CD4-positive, alpha-beta memory T cell (primary cell): ENCODE measurements at regions of chr10 and their contacts with region 1.

Region 1: GRCh38 chr10:26334932-26335573 is 103.1 kb upstream of the APBB1IP start:
- DNase-seq: peak; percentile 66 to 74 (median 72)
- H3K4me3 ChIP-seq: peak overlapping the region; percentile 38 to 53
- H3K4me3 Mint-ChIP-seq: peak overlapping the region; percentile 76 to 93 (median 84)
- H3K27ac ChIP-seq: peak overlapping the region; percentile 5
- H3K27ac Mint-ChIP-seq: peak overlapping the region in 2 of 7 donors; percentile 61 to 79
- H3K4me1 ChIP-seq: peaks cover 4% of the 10 kb centered on the region
- H3K4me1 Mint-ChIP-seq: peaks cover 4 to 8% (median 6%) of the 10 kb centered on the region in 4 donors
- H3K27me3 ChIP-seq: no peaks in the 10 kb centered on the region
- H3K27me3 Mint-ChIP-seq: peaks cover 0 to 2% of the 10 kb centered on the region in 2 donors

Region 2: DNA sequence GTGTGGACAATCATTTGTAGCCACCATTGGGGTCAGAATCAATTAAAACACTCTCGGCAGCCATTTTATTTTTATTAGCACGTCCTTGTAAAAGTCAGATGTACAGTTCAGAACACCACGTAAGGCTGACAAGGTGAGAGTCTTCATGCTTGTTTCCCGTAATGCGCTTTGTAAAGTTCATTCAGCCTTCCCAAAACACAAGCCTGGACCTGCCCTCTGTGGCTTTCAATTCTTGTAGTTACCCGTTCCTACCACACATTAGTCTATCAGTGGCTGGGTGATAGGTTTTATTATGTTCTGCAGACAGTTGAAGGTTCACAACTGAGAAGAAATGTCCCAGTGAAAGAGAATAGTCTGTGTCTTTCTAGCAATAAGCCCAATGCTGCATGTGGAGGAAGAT is 83.1 kb before region 1 on chr10:
- CTCF ChIA-PET with region 1: no interaction called
- POLR2A ChIA-PET with region 1: no interaction called
- intact Hi-C with region 1: no loop called
- DNase-seq: no peak
- H3K4me3 ChIP-seq: no peak overlapping the region
- H3K4me3 Mint-ChIP-seq: no peak overlapping the region
- H3K27ac ChIP-seq: no peak overlapping the region
- H3K27ac Mint-ChIP-seq: no peak overlapping the region
- H3K4me1 ChIP-seq: no peaks in the 10 kb centered on the region
- H3K4me1 Mint-ChIP-seq: no peaks in the 10 kb centered on the region
- H3K27me3 ChIP-seq: no peaks in the 10 kb centered on the region
- H3K27me3 Mint-ChIP-seq: peaks cover 9 to 11% of the 10 kb centered on the region in 2 donors

Region 3: GRCh38 chr10:26269754-26270153 is 65.3 kb before region 1 on chr10:
- CTCF ChIA-PET with region 1: no interaction called
- POLR2A ChIA-PET with region 1: no interaction called
- intact Hi-C with region 1: no loop called
- DNase-seq: no peak
- H3K4me3 ChIP-seq: no peak overlapping the region
- H3K4me3 Mint-ChIP-seq: no peak overlapping the region
- H3K27ac ChIP-seq: no peak overlapping the region
- H3K27ac Mint-ChIP-seq: no peak overlapping the region
- H3K4me1 ChIP-seq: no peaks in the 10 kb centered on the region
- H3K4me1 Mint-ChIP-seq: peaks cover 0 to 2% (median 0%) of the 10 kb centered on the region in 4 donors
- H3K27me3 ChIP-seq: no peaks in the 10 kb centered on the region
- H3K27me3 Mint-ChIP-seq: peaks cover 15 to 26% of the 10 kb centered on the region in 2 donors

Region 4: GRCh38 chr10:26486991-26487850 is 152.2 kb after region 1 on chr10:
- CTCF ChIA-PET with region 1: no interaction called
- POLR2A ChIA-PET with region 1: no interaction called
- intact Hi-C with region 1: loop called (anchors 1 kb)
- DNase-seq: peak; percentile 58 to 91 (median 70)
- H3K4me3 ChIP-seq: peak overlapping the region in 1 of 2 donors; percentile 49
- H3K4me3 Mint-ChIP-seq: peak overlapping the region; percentile 55 to 77 (median 68)
- H3K27ac ChIP-seq: peak overlapping the region; percentile 73
- H3K27ac Mint-ChIP-seq: peak overlapping the region; percentile 94 to 97 (median 95)
- H3K4me1 ChIP-seq: peaks cover 76% of the 10 kb centered on the region
- H3K4me1 Mint-ChIP-seq: peaks cover 53 to 67% (median 58%) of the 10 kb centered on the region in 4 donors
- H3K27me3 ChIP-seq: no peaks in the 10 kb centered on the region
- H3K27me3 Mint-ChIP-seq: no peaks in the 10 kb centered on the region

Region 5: DNA sequence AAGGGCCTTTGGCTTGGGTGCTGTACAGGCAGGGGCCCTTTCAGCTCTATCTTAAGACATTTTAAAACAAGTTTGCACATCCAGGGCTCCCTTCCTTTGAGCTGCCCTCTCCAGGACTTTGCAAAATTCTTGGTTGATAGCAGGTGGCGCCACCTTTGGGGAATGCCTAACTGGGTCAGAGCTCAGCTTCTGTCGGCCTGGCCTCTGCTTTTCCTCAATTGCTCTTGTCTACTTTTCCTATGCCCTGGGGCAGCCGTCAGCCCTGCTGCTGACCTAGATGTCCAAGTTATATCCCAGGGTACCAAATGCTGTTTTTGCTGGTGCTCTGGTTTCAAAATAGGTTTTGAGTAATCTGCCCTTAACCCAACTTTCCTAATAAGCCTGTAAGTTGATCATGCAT is 168.9 kb after region 1 on chr10:
- CTCF ChIA-PET with region 1: interaction called, 38 read pairs
- POLR2A ChIA-PET with region 1: no interaction called
- intact Hi-C with region 1: no loop called
- DNase-seq: no peak
- H3K4me3 ChIP-seq: no peak overlapping the region
- H3K4me3 Mint-ChIP-seq: no peak overlapping the region
- H3K27ac ChIP-seq: no peak overlapping the region
- H3K27ac Mint-ChIP-seq: peak overlapping the region; percentile 10 to 85 (median 66)
- H3K4me1 ChIP-seq: no peaks in the 10 kb centered on the region
- H3K4me1 Mint-ChIP-seq: peaks cover 8 to 34% (median 20%) of the 10 kb centered on the region in 4 donors
- H3K27me3 ChIP-seq: no peaks in the 10 kb centered on the region
- H3K27me3 Mint-ChIP-seq: no peaks in the 10 kb centered on the region

Region 6: DNA sequence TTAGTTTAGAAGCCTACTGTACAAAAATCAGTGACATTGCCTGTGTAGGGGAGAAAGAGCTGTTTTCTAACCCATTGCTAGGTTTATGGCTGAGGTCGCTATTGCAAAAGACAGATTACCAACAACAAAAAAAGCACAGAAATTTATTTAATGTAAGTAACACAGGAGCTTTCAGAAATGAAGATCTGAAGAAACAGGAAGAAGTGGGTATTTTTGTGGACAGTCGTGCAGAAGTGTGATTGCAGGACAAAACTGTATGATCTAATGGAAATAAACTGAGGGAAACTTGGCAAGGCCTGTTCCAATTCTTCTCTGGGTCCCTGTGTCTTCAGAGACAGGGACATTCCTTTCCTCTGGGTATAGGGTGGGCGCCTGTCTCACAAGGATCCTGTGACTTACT is 190.5 kb after region 1 on chr10:
- CTCF ChIA-PET with region 1: no interaction called
- POLR2A ChIA-PET with region 1: no interaction called
- intact Hi-C with region 1: no loop called
- DNase-seq: no peak
- H3K4me3 ChIP-seq: no peak overlapping the region
- H3K4me3 Mint-ChIP-seq: no peak overlapping the region
- H3K27ac ChIP-seq: no peak overlapping the region
- H3K27ac Mint-ChIP-seq: peak overlapping the region in 5 of 7 donors; percentile 24 to 75 (median 47)
- H3K4me1 ChIP-seq: no peaks in the 10 kb centered on the region
- H3K4me1 Mint-ChIP-seq: peaks cover 0 to 20% (median 8%) of the 10 kb centered on the region in 4 donors
- H3K27me3 ChIP-seq: no peaks in the 10 kb centered on the region
- H3K27me3 Mint-ChIP-seq: no peaks in the 10 kb centered on the region

Region 7: GRCh38 chr10:26556748-26557640 is 221.9 kb after region 1 on chr10:
- CTCF ChIA-PET with region 1: interaction called, 58 read pairs
- POLR2A ChIA-PET with region 1: no interaction called
- intact Hi-C with region 1: loop called (anchors 1 kb)
- DNase-seq: peak in 4 of 5 donors; percentile 39 to 44 (median 44)
- H3K4me3 ChIP-seq: no peak overlapping the region
- H3K4me3 Mint-ChIP-seq: no peak overlapping the region
- H3K27ac ChIP-seq: no peak overlapping the region
- H3K27ac Mint-ChIP-seq: peak overlapping the region in 4 of 7 donors; percentile 8 to 46 (median 31)
- H3K4me1 ChIP-seq: no peaks in the 10 kb centered on the region
- H3K4me1 Mint-ChIP-seq: peaks cover 0 to 21% (median 8%) of the 10 kb centered on the region in 4 donors
- H3K27me3 ChIP-seq: no peaks in the 10 kb centered on the region
- H3K27me3 Mint-ChIP-seq: no peaks in the 10 kb centered on the region

Region 8: GRCh38 chr10:26682931-26683330 is 347.9 kb after region 1 on chr10:
- CTCF ChIA-PET with region 1: interaction called, 4 read pairs
- POLR2A ChIA-PET with region 1: no interaction called
- intact Hi-C with region 1: loop called (anchors 2 kb)
- DNase-seq: peak in 4 of 5 donors; percentile 47 to 67 (median 58)
- H3K4me3 ChIP-seq: no peak overlapping the region
- H3K4me3 Mint-ChIP-seq: peak overlapping the region in 6 of 8 donors; percentile 7 to 77 (median 40)
- H3K27ac ChIP-seq: no peak overlapping the region
- H3K27ac Mint-ChIP-seq: peak overlapping the region; percentile 32 to 96 (median 88)
- H3K4me1 ChIP-seq: peaks cover 15% of the 10 kb centered on the region
- H3K4me1 Mint-ChIP-seq: peaks cover 14 to 24% (median 19%) of the 10 kb centered on the region in 4 donors
- H3K27me3 ChIP-seq: no peaks in the 10 kb centered on the region
- H3K27me3 Mint-ChIP-seq: peaks cover 1 to 2% of the 10 kb centered on the region in 2 donors

Region 9: DNA sequence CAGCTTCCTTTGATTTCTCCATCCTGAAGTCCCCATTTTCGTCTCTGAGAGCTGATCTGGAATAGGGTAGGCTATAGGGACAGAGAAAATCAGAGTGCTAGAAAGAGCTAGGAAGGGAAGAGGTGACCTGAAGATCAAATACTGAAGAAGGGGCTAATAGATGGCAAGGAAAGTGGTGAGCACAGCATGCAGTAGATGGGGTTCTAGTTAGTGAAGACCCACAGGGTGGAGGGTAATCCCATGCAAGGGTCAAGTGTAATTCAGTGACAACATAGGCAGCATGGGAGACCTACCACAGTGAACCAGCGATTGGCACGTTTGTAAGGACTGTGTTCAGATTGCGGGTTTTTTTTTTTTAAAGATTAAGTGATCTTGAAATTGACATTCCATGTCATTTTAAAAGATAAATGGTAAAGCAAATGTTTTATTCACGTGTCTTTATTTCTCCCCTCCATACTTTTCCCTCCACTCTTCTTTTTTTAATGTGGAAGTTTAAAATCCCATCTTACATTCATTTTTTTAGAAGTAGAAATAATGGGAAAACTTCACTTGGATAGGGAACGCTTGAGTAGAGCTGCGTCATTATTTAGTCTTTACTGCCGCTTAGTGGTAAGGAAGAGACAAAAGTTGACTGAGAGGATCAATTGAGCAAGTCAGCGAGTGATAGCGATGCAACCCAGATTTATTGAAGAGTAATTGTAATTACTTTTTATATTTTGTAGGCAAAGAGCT is 546.7 kb after region 1 on chr10:
- CTCF ChIA-PET with region 1: interaction called, 46 read pairs
- POLR2A ChIA-PET with region 1: no interaction called
- intact Hi-C with region 1: no loop called
- DNase-seq: peak in 4 of 5 donors; percentile 34 to 56 (median 43)
- H3K4me3 ChIP-seq: no peak overlapping the region
- H3K4me3 Mint-ChIP-seq: no peak overlapping the region
- H3K27ac ChIP-seq: no peak overlapping the region
- H3K27ac Mint-ChIP-seq: no peak overlapping the region
- H3K4me1 ChIP-seq: no peaks in the 10 kb centered on the region
- H3K4me1 Mint-ChIP-seq: peaks cover 0 to 5% (median 1%) of the 10 kb centered on the region in 4 donors
- H3K27me3 ChIP-seq: no peaks in the 10 kb centered on the region
- H3K27me3 Mint-ChIP-seq: peaks cover 7 to 9% of the 10 kb centered on the region in 2 donors

Region 10: DNA sequence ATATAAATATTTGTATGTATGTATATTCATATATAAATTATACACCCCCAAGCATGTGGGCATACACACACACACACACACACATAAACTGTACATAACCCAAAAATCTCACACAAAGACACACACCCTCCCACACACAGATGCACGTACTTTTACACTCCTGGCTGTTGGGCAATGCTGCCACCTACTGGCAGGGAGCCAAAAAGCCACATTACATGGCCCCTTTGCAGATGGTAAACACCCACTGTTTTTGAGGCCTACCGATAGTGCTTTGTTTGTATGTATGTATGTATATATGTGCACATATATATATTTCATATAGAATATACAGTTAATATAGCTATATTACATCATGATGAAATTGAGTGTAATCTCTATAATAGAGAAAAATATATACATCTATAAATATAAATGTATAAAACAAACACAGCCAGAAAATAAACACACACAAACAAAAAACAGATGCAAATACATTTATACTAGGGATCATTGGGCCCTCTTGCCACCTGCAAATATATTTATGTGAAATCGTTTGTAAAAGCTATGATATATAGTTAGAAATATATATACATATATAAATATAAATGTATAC is 1025.6 kb after region 1 on chr10:
- CTCF ChIA-PET with region 1: interaction called, 4 read pairs
- POLR2A ChIA-PET with region 1: no interaction called
- intact Hi-C with region 1: loop called (anchors 2 kb)
- DNase-seq: peak; percentile 78 to 81 (median 81)
- H3K4me3 ChIP-seq: no peak overlapping the region
- H3K4me3 Mint-ChIP-seq: no peak overlapping the region
- H3K27ac ChIP-seq: no peak overlapping the region
- H3K27ac Mint-ChIP-seq: no peak overlapping the region
- H3K4me1 ChIP-seq: no peaks in the 10 kb centered on the region
- H3K4me1 Mint-ChIP-seq: no peaks in the 10 kb centered on the region
- H3K27me3 ChIP-seq: no peaks in the 10 kb centered on the region
- H3K27me3 Mint-ChIP-seq: no peaks in the 10 kb centered on the region